ENCODE measurements at regions of chr3 and their contacts with region 1.

Region 1: DNA sequence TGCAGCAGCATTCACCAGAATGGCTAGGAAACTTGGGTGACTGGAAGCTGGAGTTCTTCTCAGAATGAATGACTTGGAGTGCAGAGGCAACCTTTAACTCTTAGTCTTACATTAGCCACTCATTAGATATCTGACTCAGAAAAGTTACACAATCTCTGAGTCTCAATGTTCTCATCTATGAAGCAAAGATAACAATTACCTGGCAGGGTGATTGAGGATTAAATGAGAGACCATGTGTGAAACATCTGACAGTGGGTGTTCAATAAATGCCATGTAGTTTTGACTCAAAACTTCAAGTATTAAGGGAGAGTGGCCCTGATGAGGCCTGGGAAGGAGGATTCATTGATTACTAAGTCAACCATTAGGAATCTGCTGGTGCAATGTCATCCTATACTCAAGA is 48.3 kb downstream of the MRPL3 start:
- DNase-seq: no peak
- H3K4me3 ChIP-seq: no peak overlapping the region
- H3K27ac ChIP-seq: no peak overlapping the region
- H3K4me1 ChIP-seq: no peaks in the 10 kb centered on the region; the same call in 1 of the 2 replicates
- H3K27me3 ChIP-seq: no peaks in the 10 kb centered on the region
- CTCF ChIP-seq: no peak

Region 2: DNA sequence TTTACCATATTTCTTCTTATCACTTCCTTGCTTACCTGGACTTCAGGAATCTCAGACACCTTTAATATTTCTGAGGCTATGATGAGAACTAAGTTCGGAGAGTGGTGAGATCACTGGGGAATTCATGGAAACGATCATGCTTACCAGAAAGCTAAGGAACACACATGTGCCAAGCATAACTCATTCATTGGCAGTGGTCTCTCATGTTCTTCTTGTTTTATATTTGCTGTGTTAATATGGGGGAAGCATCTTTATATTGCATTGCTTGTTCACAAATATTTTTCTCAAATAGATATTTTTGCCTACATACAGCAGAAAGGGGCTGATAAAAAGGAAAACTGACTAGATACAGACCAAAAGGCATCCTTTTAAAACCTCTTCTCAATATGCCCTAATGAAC is 881.7 kb before region 1 on chr3:
- CTCF ChIA-PET with region 1: interaction called, 14 read pairs
- POLR2A ChIA-PET with region 1: no interaction called
- intact Hi-C with region 1: no loop called
- DNase-seq: no peak
- H3K4me3 ChIP-seq: no peak overlapping the region
- H3K27ac ChIP-seq: no peak overlapping the region
- H3K4me1 ChIP-seq: no peaks in the 10 kb centered on the region
- H3K27me3 ChIP-seq: peaks cover 82% of the 10 kb centered on the region
- CTCF ChIP-seq: no peak

Measured in PC-9 (cell line).